ENCODE measurements at regions of chr2 and their contacts with region 1.

Region 1: GRCh38 chr2:157443795-157444640 is at the start of gene CYTIP:
- DNase-seq: peak; percentile 84
- H3K4me3 Mint-ChIP-seq: peak within 1 kb of the TSS; percentile 97
- H3K27ac Mint-ChIP-seq: peak within 1 kb of the TSS; percentile 100
- H3K4me1 Mint-ChIP-seq: peaks cover 40% of the 10 kb centered on the region
- H3K27me3 Mint-ChIP-seq: no peaks in the 10 kb centered on the region
- total RNA-seq, gene CYTIP: 599 to 610 TPM

Region 2: DNA sequence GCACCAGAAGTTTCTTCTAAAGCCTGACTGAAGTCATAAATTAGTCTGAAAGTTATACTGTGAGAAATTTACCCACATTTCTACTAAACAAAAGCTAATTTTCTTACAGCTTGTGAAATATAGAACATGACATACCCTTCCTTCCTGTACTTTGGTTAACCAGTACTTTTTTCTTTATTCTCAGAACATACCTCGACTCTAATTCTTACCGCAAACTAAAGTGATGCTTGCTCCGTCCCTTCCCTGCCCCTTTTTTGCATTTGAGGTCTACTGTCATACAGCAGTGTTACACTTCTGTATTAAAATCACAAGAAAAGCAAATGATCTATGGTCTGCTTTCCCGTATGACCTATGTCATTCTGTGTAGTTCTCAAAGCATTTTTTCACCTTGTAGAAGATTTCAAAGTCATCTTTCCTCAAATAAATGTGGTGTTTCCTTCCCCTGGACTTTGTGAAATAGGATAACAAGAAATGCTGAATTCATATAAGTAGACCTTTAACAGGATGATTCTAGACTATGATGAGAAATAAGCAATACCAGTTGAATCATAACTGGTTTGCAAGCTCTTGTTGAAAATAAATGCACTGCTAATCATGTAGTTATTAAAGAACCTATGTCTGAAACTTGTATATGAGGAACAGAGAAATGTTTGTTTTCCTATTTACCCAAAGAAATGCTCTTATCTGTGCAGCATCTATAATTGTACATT is 30.5 kb before region 1 on chr2:
- CTCF ChIA-PET with region 1: interaction called, 5 read pairs
- intact Hi-C with region 1: loop called (anchors 1 kb)
- DNase-seq: peak; percentile 78
- H3K4me3 Mint-ChIP-seq: peak overlapping the region; percentile 64
- H3K27ac Mint-ChIP-seq: peak overlapping the region; percentile 99
- H3K4me1 Mint-ChIP-seq: peaks cover 90% of the 10 kb centered on the region
- H3K27me3 Mint-ChIP-seq: no peaks in the 10 kb centered on the region

Region 3: GRCh38 chr2:157420771-157421323 is 23.2 kb before region 1 on chr2:
- CTCF ChIA-PET with region 1: interaction called, 5 read pairs
- intact Hi-C with region 1: loop called (anchors 1 kb)
- DNase-seq: peak; percentile 66
- H3K4me3 Mint-ChIP-seq: peak overlapping the region; percentile 33
- H3K27ac Mint-ChIP-seq: peak overlapping the region; percentile 95
- H3K4me1 Mint-ChIP-seq: peaks cover 79% of the 10 kb centered on the region
- H3K27me3 Mint-ChIP-seq: no peaks in the 10 kb centered on the region

Region 4: DNA sequence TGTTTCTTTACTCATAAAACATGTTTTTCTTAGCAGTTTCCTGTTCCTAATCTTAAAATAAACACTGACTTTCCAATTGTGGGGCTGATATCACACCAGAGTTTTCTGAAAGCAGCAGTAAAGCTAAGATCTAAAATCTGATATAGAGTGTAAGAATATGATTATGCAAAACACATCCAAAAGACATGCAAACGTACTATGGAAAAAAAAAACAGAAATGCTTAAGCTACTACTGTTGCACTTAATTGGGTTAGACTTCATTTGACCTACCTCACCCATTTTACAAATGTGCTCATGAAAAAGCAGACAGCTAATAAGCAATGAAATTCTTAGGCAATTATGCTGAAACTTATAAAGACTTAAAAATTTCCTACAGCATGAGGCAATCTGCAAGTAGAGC is 10.6 kb before region 1 on chr2:
- CTCF ChIA-PET with region 1: interaction called, 20 read pairs
- intact Hi-C with region 1: loop called (anchors 1 kb)
- DNase-seq: no peak
- H3K4me3 Mint-ChIP-seq: peak overlapping the region; percentile 75
- H3K27ac Mint-ChIP-seq: peak overlapping the region; percentile 100
- H3K4me1 Mint-ChIP-seq: peaks cover 62% of the 10 kb centered on the region
- H3K27me3 Mint-ChIP-seq: no peaks in the 10 kb centered on the region

Region 5: GRCh38 chr2:157460384-157460837 is 16.4 kb after region 1 on chr2:
- CTCF ChIA-PET with region 1: interaction called, 15 read pairs
- intact Hi-C with region 1: loop called (anchors 1 kb)
- DNase-seq: no peak
- H3K4me3 Mint-ChIP-seq: peak overlapping the region; percentile 45
- H3K27ac Mint-ChIP-seq: peak overlapping the region; percentile 99
- H3K4me1 Mint-ChIP-seq: peaks cover 92% of the 10 kb centered on the region
- H3K27me3 Mint-ChIP-seq: no peaks in the 10 kb centered on the region

Region 6: DNA sequence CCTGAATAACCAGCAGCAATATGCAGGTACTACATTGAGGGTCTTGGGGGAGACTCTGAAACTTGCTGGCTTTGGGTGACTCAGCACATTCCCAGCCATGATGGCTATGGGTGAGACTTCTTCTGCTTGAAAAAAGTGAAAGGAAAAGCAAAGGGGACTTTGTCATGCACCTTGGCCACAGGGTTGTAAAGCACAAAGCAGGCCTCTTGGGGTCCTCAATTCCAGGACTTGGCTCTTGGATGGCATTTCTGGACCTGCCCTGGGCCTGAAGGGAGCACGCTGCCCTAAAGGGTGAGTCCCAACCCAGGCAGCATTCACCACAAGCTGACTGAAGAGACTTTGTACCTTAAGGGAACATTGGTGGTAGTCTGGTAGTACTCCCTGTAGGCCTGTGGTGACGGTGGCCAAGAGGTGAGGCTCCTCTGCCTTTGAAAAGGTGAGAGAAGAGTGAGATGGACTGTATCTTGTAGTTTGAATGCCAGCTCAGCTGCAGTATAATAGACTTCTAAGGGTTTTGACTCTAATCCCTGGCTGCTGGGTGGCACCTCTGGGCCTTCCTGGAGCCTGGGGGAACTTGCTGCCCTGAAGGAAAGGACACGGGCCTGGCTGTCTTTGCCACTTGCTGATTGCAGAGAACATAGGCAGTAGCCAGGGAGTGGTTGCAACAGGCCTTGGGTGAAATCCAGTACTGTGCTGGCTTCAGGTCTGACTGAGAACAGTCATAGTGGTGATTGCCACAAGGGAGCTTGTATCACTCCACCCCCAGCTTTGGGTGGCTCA is 36.4 kb after region 1 on chr2:
- CTCF ChIA-PET with region 1: interaction called, 8 read pairs
- intact Hi-C with region 1: loop called (anchors 1 kb)
- DNase-seq: peak; percentile 83
- H3K4me3 Mint-ChIP-seq: peak overlapping the region; percentile 64
- H3K27ac Mint-ChIP-seq: peak overlapping the region; percentile 95
- H3K4me1 Mint-ChIP-seq: peaks cover 85% of the 10 kb centered on the region
- H3K27me3 Mint-ChIP-seq: no peaks in the 10 kb centered on the region